ENCODE measurements at regions of chr7 and their contacts with region 1.

Region 1: GRCh38 chr7:120554960-120555571 is 282.1 kb downstream of the KCND2 start:
- DNase-seq: peak; percentile 11
- H3K4me3 ChIP-seq: no peak overlapping the region
- H3K27ac ChIP-seq: no peak overlapping the region
- H3K27me3 ChIP-seq: no peaks in the 10 kb centered on the region
- CTCF ChIP-seq: peak; percentile 73

Region 2: GRCh38 chr7:119270045-119270464 is 1285.0 kb before region 1 on chr7:
- CTCF ChIA-PET with region 1: interaction called, 15 read pairs
- POLR2A ChIA-PET with region 1: no interaction called
- DNase-seq: peak; percentile 26
- H3K4me3 ChIP-seq: no peak overlapping the region
- H3K27ac ChIP-seq: no peak overlapping the region
- H3K27me3 ChIP-seq: no peaks in the 10 kb centered on the region
- CTCF ChIP-seq: peak; percentile 86

Measured in AG04450 (cell line).